ENCODE measurements at regions of chr15 and their contacts with region 1.

Region 1: DNA sequence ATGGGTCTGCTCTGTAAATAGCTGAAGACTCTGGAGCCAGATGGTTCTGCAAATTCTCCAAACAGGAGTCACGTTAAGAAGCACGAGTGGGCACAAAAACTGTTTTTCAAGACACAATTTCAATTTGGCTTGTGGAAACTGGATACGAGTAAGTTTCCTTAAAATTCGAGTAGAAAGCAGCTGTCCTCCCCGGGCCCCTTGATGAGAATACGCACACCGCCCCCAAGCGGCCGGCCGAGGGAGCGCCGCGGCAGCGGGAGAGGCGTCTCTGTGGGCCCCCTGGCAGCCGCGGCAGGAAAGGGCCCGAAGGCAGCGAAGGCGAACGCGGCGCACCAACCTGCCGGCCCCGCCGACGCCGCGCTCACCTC is 778 bp upstream of the THBS1 start:
- DNase-seq: peak; percentile 98
- ATAC-seq: peak; percentile 30
- H3K4me3 ChIP-seq: peak overlapping the region; percentile 46
- H3K27ac ChIP-seq: peak overlapping the region; percentile 78
- H3K4me1 ChIP-seq: peaks cover 8% of the 10 kb centered on the region
- H3K27me3 ChIP-seq: no peaks in the 10 kb centered on the region
- CTCF ChIP-seq: peak; percentile 99
- POLR2A ChIP-seq: no peak
- RAD21 ChIP-seq: peak; percentile 94

Region 2: DNA sequence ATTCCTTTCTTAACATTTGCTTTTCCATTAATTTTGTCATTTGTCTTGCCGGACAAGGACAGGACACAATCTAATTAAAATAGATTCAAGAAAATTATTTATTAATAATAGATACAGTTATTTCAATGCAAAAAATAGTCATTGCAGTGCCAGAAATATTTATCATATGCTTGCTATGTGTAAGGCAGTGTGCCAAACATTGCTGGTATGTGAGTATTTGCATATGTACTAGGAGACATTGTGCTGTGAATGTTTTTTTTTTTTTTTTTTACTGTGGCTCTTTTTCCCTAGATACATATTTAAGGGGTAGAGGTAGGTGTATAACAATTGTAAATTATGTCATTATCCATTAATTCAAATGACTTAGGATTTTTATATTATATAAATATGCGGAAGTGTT is 1304.1 kb before region 1 on chr15:
- CTCF ChIA-PET with region 1: no interaction called
- POLR2A ChIA-PET with region 1: no interaction called
- dilution Hi-C with region 1: no loop called
- in situ Hi-C with region 1: no loop called
- intact Hi-C with region 1: no loop called
- DNase-seq: peak; percentile 79
- ATAC-seq: no peak
- H3K4me3 ChIP-seq: no peak overlapping the region
- H3K27ac ChIP-seq: no peak overlapping the region
- H3K4me1 ChIP-seq: peaks cover 4% of the 10 kb centered on the region
- H3K27me3 ChIP-seq: no peaks in the 10 kb centered on the region
- CTCF ChIP-seq: no peak
- POLR2A ChIP-seq: no peak
- RAD21 ChIP-seq: no peak

Region 3: GRCh38 chr15:38707802-38708671 is 872.1 kb before region 1 on chr15:
- CTCF ChIA-PET with region 1: interaction called, 3 read pairs
- POLR2A ChIA-PET with region 1: no interaction called
- dilution Hi-C with region 1: no loop called
- in situ Hi-C with region 1: loop called (anchors 5 kb)
- intact Hi-C with region 1: loop called (anchors 1 kb)
- DNase-seq: peak; percentile 80
- ATAC-seq: peak; percentile 93
- H3K4me3 ChIP-seq: no peak overlapping the region
- H3K27ac ChIP-seq: peak overlapping the region; percentile 74; the same call in 1 of the 2 replicates
- H3K4me1 ChIP-seq: peaks cover 7% of the 10 kb centered on the region
- H3K27me3 ChIP-seq: no peaks in the 10 kb centered on the region
- CTCF ChIP-seq: peak; percentile 82
- POLR2A ChIP-seq: no peak; the same call in 1 of the 2 replicates
- RAD21 ChIP-seq: peak; percentile 95

Region 4: GRCh38 chr15:38996111-38996631 is 583.9 kb before region 1 on chr15:
- CTCF ChIA-PET with region 1: no interaction called
- POLR2A ChIA-PET with region 1: interaction called, 3 read pairs
- dilution Hi-C with region 1: no loop called
- in situ Hi-C with region 1: no loop called
- intact Hi-C with region 1: loop called (anchors 2 kb)
- DNase-seq: peak; percentile 90
- ATAC-seq: peak; percentile 74
- H3K4me3 ChIP-seq: no peak overlapping the region
- H3K27ac ChIP-seq: peak overlapping the region; percentile 99; the same call in 1 of the 2 replicates
- H3K4me1 ChIP-seq: peaks cover 28% of the 10 kb centered on the region
- H3K27me3 ChIP-seq: no peaks in the 10 kb centered on the region
- CTCF ChIP-seq: no peak
- POLR2A ChIP-seq: no peak
- RAD21 ChIP-seq: no peak

Region 5: DNA sequence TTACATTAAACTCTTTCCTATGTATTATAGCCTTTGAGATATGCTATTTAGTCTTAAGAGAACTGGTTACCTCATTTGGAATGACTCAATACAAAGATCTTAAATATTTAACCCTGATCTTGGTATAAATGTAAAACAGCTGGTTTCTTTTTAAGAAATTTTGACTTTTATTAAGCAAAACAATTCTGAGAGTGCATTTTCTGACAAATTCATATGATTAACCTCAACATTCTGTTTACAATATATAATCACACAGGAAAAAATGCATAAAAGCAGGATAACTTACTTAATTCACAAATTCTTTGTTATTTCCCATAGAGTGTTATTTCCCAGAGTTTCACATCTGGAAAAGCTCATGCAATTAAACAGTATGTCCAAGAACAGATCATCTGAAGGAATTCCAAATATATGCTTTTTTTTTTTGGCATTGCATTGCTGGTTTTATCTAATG is 399.6 kb before region 1 on chr15:
- CTCF ChIA-PET with region 1: interaction called, 3 read pairs
- POLR2A ChIA-PET with region 1: interaction called, 14 read pairs
- dilution Hi-C with region 1: no loop called
- in situ Hi-C with region 1: no loop called
- intact Hi-C with region 1: loop called (anchors 1 kb)
- DNase-seq: peak; percentile 88
- ATAC-seq: peak; percentile 66
- H3K4me3 ChIP-seq: no peak overlapping the region
- H3K27ac ChIP-seq: peak overlapping the region; percentile 100; the same call in 1 of the 2 replicates
- H3K4me1 ChIP-seq: peaks cover 20% of the 10 kb centered on the region
- H3K27me3 ChIP-seq: no peaks in the 10 kb centered on the region
- CTCF ChIP-seq: no peak
- POLR2A ChIP-seq: no peak
- RAD21 ChIP-seq: no peak

Region 6: GRCh38 chr15:39301589-39301999 is 278.5 kb before region 1 on chr15:
- CTCF ChIA-PET with region 1: interaction called, 3 read pairs
- POLR2A ChIA-PET with region 1: interaction called, 4 read pairs
- dilution Hi-C with region 1: no loop called
- in situ Hi-C with region 1: loop called (anchors 5 kb)
- intact Hi-C with region 1: loop called (anchors 1 kb)
- DNase-seq: peak; percentile 77
- ATAC-seq: peak; percentile 7; the same call in 1 of the 2 replicates
- H3K4me3 ChIP-seq: no peak overlapping the region
- H3K27ac ChIP-seq: peak overlapping the region; percentile 96
- H3K4me1 ChIP-seq: peaks cover 24% of the 10 kb centered on the region
- H3K27me3 ChIP-seq: no peaks in the 10 kb centered on the region
- CTCF ChIP-seq: no peak
- POLR2A ChIP-seq: no peak
- RAD21 ChIP-seq: no peak

Region 7: DNA sequence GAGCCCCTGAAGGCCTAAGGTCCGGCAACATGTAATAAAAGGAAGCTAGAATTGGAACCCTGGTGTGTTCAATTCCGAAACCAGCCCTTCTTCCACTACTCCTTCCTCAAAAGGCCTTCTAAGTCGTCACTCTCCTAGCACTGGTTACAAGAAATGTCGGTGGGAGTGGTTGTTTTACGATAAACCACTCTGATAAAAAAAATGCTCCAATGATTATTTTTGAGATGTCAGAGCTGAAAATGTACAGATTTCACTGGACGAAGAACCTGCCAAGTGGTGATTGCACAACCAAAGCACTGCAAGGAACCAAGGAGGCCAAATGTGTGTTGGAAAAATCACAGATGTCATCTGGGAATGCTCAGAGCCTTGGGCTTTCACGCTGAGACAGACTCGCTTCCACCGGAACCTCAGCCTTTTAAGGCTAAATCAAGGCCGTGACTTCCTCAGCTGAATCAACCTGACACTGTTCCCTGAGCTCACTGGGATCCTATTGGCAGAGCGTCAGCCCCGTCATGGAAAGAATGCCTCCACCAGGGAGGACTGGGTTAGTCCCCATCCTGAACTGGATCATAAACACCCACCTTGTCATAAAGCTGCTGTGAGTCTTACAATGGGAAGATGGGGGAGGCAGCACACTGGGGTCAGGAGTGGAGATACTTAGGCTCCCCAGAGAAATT is 107.3 kb before region 1 on chr15:
- CTCF ChIA-PET with region 1: no interaction called
- POLR2A ChIA-PET with region 1: interaction called, 10 read pairs
- dilution Hi-C with region 1: no loop called
- in situ Hi-C with region 1: no loop called
- intact Hi-C with region 1: loop called (anchors 1 kb)
- DNase-seq: peak; percentile 99
- ATAC-seq: peak; percentile 93
- H3K4me3 ChIP-seq: no peak overlapping the region
- H3K27ac ChIP-seq: peak overlapping the region; percentile 99; the same call in 1 of the 2 replicates
- H3K4me1 ChIP-seq: peaks cover 15% of the 10 kb centered on the region; the same call in 1 of the 2 replicates
- H3K27me3 ChIP-seq: no peaks in the 10 kb centered on the region
- CTCF ChIP-seq: no peak
- POLR2A ChIP-seq: no peak
- RAD21 ChIP-seq: no peak